BJ (cell line): ENCODE measurements at regions of chr17 and their contacts with region 1.

Region 1: DNA sequence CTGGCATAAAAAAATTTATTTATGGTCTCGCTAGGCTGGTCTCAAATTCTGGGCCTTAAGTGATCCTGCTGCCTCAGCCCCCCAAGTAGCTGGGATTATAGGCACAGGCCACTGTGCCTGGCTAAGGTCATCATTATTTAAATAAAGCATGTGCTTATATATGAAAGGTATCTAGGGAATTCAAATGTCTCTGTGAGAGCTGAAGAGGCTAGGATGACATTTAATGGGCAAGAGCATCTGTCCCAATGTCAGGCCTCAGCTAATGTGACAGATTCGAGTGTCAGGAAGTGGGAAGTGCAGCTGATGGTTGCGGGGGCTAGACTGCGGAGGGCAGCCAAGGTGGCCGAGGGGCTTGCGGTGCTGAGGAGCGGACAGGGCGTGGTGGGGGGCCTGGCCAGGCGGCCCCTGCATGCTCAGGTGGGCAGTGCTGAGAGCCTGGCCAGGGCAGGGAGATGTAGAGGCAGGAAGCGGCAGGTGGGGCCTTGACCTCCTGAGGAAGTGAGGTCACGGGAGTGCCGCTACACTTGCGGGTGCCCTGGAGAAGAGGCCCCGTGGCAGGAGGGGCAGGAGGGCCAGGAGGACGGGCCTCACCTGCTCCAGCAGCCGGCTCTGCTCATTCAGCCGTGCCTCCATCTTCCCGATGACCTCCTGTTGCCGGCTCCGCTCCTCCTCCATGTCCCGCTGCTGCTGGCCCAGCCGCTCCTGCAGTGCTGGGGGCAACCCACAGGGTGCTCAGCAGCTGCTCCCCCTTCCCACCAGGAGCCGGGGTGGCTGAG is 12.6 kb upstream of the MRPL38 start:
- DNase-seq: no peak
- H3K4me3 ChIP-seq: no peak overlapping the region
- H3K27me3 ChIP-seq: no peaks in the 10 kb centered on the region
- CTCF ChIP-seq: no peak

Region 2: GRCh38 chr17:75864448-75864871 is 52.9 kb before region 1 on chr17:
- CTCF ChIA-PET with region 1: no interaction called
- POLR2A ChIA-PET with region 1: no interaction called
- DNase-seq: peak; percentile 63
- H3K4me3 ChIP-seq: no peak overlapping the region
- H3K27me3 ChIP-seq: no peaks in the 10 kb centered on the region
- CTCF ChIP-seq: no peak

Region 3: DNA sequence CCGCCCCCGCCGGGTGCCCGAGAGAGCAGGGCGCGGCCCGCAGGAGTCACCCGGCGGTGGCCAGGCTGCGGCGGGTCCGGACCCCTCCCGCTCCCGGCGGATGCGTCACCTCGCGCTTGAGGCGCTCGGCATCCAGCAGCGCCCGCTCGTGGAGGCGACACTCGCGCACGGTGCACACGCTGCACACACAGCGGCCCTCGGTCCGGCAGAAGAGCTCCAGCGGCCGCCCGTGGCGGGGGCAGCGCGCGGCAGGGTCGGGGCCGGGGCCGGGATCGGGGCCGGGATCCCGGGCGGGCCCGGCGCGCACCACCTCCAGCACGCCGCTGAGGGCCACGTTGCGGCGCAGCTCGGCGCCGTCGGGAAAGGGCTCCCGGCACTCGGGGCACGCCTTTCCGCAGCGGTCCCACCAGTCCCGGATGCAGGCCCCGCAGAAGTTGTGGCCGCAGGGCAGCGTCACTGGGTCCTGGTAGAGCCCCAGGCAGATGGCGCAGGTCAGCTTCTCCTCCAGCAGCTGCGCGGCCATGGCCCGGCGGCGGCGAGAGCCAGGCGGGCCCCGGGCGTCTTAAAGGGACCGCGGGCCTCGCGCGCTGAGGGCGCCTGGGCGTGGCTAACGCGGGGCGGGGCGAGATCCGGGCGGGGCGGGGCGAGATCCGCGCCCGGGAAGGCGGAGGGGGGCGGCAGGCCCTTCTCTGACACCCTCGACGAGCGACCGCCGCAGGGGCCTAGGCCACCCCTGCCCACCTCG is 20.7 kb before region 1 on chr17 and contains the start of gene TRIM65:
- CTCF ChIA-PET with region 1: no interaction called
- POLR2A ChIA-PET with region 1: no interaction called
- DNase-seq: no peak
- H3K4me3 ChIP-seq: peak within 1 kb of the TSS; percentile 52
- H3K27me3 ChIP-seq: no peaks in the 10 kb centered on the region
- CTCF ChIP-seq: peak; percentile 40
- polyA plus RNA-seq, gene TRIM65: 5.5 and 8.6 TPM in 2 replicates

Region 4: GRCh38 chr17:75927286-75927922 is 10.1 kb after region 1 on chr17:
- CTCF ChIA-PET with region 1: interaction called, 11 read pairs
- POLR2A ChIA-PET with region 1: no interaction called
- DNase-seq: no peak
- H3K4me3 ChIP-seq: no peak overlapping the region
- H3K27me3 ChIP-seq: no peaks in the 10 kb centered on the region
- CTCF ChIP-seq: peak; percentile 30

Region 5: GRCh38 chr17:75970011-75970523 is 52.7 kb after region 1 on chr17:
- CTCF ChIA-PET with region 1: no interaction called
- POLR2A ChIA-PET with region 1: no interaction called
- DNase-seq: no peak
- H3K4me3 ChIP-seq: no peak overlapping the region
- H3K27me3 ChIP-seq: no peaks in the 10 kb centered on the region
- CTCF ChIP-seq: no peak